Common myeloid progenitor, CD34-positive (primary cell): ENCODE measurements at regions of chr13 and their contacts with region 1.

Region 1: GRCh38 chr13:32246468-32246867 is 68.7 kb downstream of the ZAR1L start:
- DNase-seq: peak; percentile 60 to 80 (median 76)
- H3K4me3 ChIP-seq: no peak overlapping the region
- H3K27ac ChIP-seq: no peak overlapping the region
- H3K4me1 ChIP-seq: peaks cover 0 to 13% (median 0%) of the 10 kb centered on the region in 4 experiments
- H3K27me3 ChIP-seq: no peaks in the 10 kb centered on the region

Region 2: DNA sequence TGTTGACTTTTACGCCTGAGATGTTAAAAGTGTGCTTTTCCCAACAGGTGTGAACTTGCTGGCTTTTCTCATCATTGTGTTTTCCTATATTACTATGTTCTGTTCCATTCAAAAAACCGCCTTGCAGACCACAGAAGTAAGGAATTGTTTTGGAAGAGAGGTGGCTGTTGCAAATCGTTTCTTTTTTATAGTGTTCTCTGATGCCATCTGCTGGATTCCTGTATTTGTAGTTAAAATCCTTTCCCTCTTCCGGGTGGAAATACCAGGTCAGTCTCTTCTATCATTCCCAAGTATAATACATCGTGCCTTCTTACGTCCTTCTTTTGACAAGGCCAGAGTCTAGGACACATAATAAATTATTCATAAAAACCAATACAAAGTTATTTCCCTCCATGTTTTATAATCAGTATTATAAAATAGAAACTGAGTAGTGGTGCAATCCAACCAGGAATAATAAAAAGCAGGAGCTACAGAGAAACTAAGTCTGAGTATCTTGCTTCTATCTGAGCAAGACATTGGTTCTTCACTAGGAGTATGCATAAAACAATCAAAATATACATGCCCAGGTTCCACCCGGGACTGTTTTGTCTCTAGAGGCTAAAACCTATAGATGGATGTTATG is 449.2 kb before region 1 on chr13:
- CTCF ChIA-PET with region 1: no interaction called
- POLR2A ChIA-PET with region 1: no interaction called
- DNase-seq: no peak
- H3K4me3 ChIP-seq: no peak overlapping the region
- H3K27ac ChIP-seq: no peak overlapping the region
- H3K4me1 ChIP-seq: peaks cover 2 to 15% (median 4%) of the 10 kb centered on the region in 4 experiments
- H3K27me3 ChIP-seq: no peaks in the 10 kb centered on the region

Region 3: DNA sequence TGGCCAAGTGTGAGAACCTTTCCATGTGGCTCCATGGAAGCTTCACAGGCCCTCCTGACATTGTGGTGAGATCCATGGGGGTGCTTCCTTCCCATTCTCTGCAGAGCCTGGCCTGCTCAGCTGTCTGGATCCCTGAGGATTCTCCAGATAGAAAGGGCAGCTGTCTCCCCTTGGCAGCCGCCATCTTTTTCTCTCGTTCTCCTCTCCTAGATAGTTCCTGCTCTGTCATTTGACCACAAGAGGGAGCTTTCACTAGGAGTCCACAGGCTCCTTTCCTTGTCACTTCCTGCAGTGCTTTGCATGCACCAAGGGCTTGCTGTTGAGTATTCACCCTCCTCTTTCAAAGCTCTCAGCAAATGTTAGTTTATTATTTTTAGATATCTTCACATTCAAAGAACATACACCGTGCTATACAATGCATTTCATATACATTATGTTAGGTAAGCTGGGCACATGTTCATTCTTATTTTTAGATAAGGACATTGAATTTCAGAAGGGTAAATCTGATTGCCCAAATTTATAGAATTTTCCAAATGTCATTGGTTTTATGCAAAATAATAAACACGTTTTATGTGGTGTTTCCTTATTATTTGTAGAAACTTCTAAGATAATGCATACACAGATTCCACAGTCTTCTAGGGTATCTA is 81.7 kb before region 1 on chr13:
- CTCF ChIA-PET with region 1: no interaction called
- POLR2A ChIA-PET with region 1: no interaction called
- DNase-seq: peak; percentile 43 to 63 (median 60)
- H3K4me3 ChIP-seq: no peak overlapping the region
- H3K27ac ChIP-seq: no peak overlapping the region
- H3K4me1 ChIP-seq: peaks cover 0 to 22% (median 1%) of the 10 kb centered on the region in 4 experiments
- H3K27me3 ChIP-seq: no peaks in the 10 kb centered on the region

Region 4: DNA sequence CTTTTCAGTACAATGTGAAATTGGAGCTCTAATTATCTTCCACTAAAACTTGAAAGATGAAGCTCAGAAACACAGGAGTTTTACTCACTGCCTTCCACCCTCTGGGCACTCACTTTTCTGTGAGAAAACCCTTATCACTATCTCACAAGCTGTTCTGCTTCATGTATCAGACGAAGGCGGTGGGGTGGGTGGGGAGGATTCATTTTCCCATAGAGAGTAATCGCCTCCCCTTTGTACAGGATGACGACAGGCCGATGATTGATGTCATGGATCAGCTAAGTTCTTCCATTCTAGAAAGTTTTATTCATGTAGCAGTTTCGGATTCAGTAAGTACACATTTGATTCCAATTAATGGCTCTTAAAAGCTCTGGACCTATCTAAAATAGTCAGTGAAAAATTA is 71.2 kb before region 1 on chr13:
- CTCF ChIA-PET with region 1: no interaction called
- POLR2A ChIA-PET with region 1: no interaction called
- DNase-seq: peak; percentile 17 to 60 (median 48)
- H3K4me3 ChIP-seq: no peak overlapping the region
- H3K27ac ChIP-seq: no peak overlapping the region
- H3K4me1 ChIP-seq: no peaks in the 10 kb centered on the region
- H3K27me3 ChIP-seq: no peaks in the 10 kb centered on the region

Region 5: DNA sequence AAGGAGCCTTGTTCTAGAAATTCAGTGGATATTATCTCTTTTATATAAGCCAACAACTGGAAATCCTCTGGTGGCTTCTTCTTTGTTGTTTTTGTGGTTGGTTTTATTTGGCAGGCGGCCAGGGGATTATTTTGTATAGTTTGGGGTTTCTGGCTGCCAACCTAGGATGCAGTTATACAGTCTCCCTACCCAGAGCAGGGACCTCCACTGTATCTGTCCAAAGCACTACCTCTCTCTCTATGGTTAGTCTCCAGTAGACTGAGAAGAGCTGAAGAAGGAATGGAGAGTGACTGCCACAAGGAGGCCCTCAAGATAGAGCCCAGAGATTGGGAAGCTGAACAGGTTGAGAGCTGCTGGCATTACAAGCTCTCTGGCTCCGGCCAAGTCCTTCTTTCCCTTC is 11.5 kb before region 1 on chr13:
- CTCF ChIA-PET with region 1: interaction called, 18 read pairs
- POLR2A ChIA-PET with region 1: no interaction called
- DNase-seq: peak; percentile 3 to 46 (median 42)
- H3K4me3 ChIP-seq: no peak overlapping the region
- H3K27ac ChIP-seq: peak overlapping the region in 1 of 2 experiments; percentile 36
- H3K4me1 ChIP-seq: peaks cover 0 to 2% (median 0%) of the 10 kb centered on the region in 4 experiments
- H3K27me3 ChIP-seq: no peaks in the 10 kb centered on the region